Lower leg skin (tissue), 4 donors: ENCODE measurements at regions of chr14 and their contacts with region 1.

Region 1: DNA sequence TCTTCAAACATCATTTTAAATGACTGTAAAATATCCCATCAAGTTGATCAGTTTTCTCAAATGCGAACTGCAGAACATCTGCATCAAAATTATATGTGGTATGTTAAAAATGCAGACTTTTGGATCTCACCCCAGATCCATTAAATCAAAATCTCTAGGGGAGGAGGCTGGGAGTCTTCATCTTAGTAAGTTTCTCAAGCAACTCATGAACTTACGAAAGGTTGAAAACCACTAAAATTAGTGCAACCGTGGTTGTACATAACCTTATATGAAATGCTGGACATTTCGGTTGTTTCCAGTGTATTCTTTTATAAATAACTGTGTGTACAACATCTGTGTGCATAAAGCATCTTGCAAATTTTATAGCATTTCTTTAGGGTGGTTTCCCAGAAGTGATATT is 39.2 kb downstream of the ZFP36L1 start:
- DNase-seq: no peak
- H3K4me3 ChIP-seq: no peak overlapping the region
- CTCF ChIP-seq: no peak
- POLR2A ChIP-seq: no peak

Region 2: GRCh38 chr14:66986277-66986676 is 1767.4 kb before region 1 on chr14:
- intact Hi-C with region 1: no loop called
- DNase-seq: no peak
- H3K4me3 ChIP-seq: no peak overlapping the region
- CTCF ChIP-seq: no peak
- POLR2A ChIP-seq: no peak

Region 3: GRCh38 chr14:68639000-68639757 is 114.5 kb before region 1 on chr14:
- intact Hi-C with region 1: no loop called
- DNase-seq: peak; percentile 11 to 73
- H3K4me3 ChIP-seq: no peak overlapping the region
- CTCF ChIP-seq: no peak
- POLR2A ChIP-seq: no peak

Region 4: DNA sequence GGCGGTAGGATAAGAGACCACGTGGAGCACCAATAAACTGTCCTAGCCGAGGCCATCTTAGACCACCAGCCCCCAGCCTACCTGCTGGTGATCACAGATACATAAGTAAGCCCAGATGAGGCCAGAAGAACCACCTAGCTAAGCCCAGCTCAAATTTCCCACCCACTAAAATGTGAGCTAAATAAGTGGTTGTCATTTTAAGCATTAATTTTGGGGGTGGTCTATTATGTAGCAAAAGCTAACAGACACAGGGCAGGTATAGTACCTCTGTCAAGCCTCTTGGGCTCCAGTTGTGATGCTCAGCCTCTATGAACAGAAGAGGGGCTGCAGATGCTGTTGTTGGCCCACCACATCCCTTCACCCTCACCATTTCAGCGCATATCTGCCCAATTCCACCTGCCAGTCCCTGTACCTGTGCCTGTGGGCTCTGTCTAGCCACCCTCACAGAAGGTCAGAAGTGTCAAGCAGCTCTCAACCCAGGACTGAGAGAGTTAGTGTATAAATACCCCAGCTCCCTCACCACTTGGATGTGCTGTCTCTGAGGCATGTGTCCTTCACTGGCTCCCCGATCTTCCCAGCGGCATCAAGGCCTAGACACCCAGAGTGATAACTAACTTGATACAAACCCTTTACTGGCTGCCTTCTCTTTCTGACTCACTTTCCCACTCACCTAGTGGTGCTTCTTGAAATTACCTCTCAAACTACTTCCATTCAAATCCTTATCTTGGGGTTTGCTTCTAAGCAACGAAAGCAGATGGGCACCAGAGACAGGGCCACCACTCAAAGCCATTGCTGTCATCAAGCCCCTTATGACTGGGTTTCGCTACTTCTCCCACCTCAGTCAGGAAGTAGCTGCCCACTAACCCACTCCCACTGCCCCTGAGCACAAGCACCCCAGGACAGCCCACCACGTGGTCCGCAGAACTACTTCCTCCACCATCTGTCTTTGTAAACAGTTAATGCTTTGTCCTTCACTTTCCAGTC is 21.7 kb after region 1 on chr14:
- intact Hi-C with region 1: loop called (anchors 2 kb)
- DNase-seq: peak in 1 of 2 donors; percentile 68
- H3K4me3 ChIP-seq: no peak overlapping the region
- CTCF ChIP-seq: no peak
- POLR2A ChIP-seq: no peak